ENCODE measurements at regions of chr1 and their contacts with region 1.

Region 1: GRCh38 chr1:33466159-33466558 is 6.3 kb upstream of the ZSCAN20 start:
- DNase-seq: no peak
- H3K4me3 ChIP-seq: no peak overlapping the region
- H3K27ac ChIP-seq: no peak overlapping the region
- H3K4me1 ChIP-seq: peaks cover 4% of the 10 kb centered on the region
- H3K27me3 ChIP-seq: no peaks in the 10 kb centered on the region
- CTCF ChIP-seq: no peak
- EP300 ChIP-seq: no peak
- POLR2A ChIP-seq: no peak

Region 2: GRCh38 chr1:32981003-32981901 is 484.9 kb before region 1 on chr1:
- intact Hi-C with region 1: no loop called
- DNase-seq: no peak
- H3K4me3 ChIP-seq: no peak overlapping the region
- H3K27ac ChIP-seq: no peak overlapping the region
- H3K4me1 ChIP-seq: no peaks in the 10 kb centered on the region
- H3K27me3 ChIP-seq: no peaks in the 10 kb centered on the region
- CTCF ChIP-seq: no peak
- EP300 ChIP-seq: no peak
- POLR2A ChIP-seq: no peak

Region 3: DNA sequence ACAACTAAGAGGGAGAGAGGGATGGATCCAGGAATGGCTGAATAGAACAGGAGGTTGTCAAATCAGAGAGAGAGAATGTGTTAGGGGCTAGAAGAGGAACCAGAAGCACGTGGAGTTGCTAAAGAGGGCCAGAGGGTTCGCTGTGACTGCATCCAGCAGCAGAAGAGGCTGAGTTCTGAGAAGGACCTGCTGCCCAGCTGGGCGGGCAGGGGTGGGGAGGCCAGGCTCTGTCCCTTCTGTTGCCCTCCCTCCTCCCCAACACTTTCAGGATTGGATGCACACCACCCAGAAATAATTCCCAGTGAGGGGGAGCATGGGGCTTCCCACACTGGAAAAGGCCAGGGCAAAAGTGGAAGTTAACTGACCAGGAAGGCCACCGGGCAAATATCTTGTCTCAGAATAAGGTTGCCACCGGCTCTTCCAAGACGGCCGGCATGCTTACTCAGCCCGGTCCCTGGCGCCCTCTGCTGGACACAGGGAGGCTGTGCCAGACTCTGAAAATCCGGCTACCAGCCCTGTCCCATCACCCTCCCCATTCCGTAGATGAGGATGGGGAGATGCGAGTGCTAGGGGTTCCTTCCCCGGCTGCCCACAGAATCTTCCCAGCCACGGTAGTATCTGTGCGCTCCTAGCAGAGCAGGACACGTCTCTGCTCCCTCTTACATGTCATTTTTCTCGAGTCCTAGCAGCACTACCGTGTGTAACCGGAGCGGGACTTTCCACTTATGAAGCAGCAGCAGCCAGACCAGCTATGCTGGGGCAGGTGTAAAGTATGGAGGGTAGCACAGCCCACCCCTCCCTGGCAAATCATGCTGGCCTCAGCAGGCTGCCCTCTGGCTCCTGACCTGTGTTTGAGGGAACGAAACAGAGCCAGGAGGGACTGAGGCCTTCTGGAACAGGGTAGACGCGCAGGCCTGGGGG is 98.4 kb before region 1 on chr1:
- intact Hi-C with region 1: loop called in 3 of 4 experiments (anchors 5 to 10 kb)
- DNase-seq: peak; percentile 86 to 92 (median 91)
- H3K4me3 ChIP-seq: no peak overlapping the region
- H3K27ac ChIP-seq: no peak overlapping the region
- H3K4me1 ChIP-seq: peaks cover 17% of the 10 kb centered on the region
- H3K27me3 ChIP-seq: no peaks in the 10 kb centered on the region
- CTCF ChIP-seq: peak; percentile 91 to 95 (median 93)
- EP300 ChIP-seq: no peak
- POLR2A ChIP-seq: peak; percentile 33

Measured in ovary (tissue), 10 donors.